ENCODE measurements at regions of chr1 and their contacts with region 1.

Region 1: GRCh38 chr1:226062558-226063223 is at the start of gene H3-3A:
- DNase-seq: peak; percentile 99
- H3K4me3 ChIP-seq: peak within 1 kb of the TSS; percentile 60 to 91 (median 84)
- H3K27ac ChIP-seq: peak within 1 kb of the TSS; percentile 97 to 100 (median 98)
- H3K4me1 ChIP-seq: peaks cover 0 to 48% (median 42%) of the 10 kb centered on the region in 4 donors
- H3K27me3 ChIP-seq: no peaks in the 10 kb centered on the region
- CTCF ChIP-seq: peak in 1 of 4 experiments; percentile 14
- EP300 ChIP-seq: no peak
- POLR2A ChIP-seq: peak; percentile 94 to 95
- total RNA-seq, gene H3-3A: 320 to 452 (median 393) TPM

Region 2: GRCh38 chr1:225652729-225653462 is 409.8 kb before region 1 on chr1 and contains the start of gene ENAH:
- intact Hi-C with region 1: loop called (anchors 5 kb)
- DNase-seq: peak; percentile 93
- H3K4me3 ChIP-seq: peak within 1 kb of the TSS; percentile 97 to 100 (median 98)
- H3K27ac ChIP-seq: peak within 1 kb of the TSS; percentile 97 to 100 (median 99)
- H3K4me1 ChIP-seq: peaks cover 0 to 53% (median 42%) of the 10 kb centered on the region in 4 donors
- H3K27me3 ChIP-seq: no peaks in the 10 kb centered on the region
- CTCF ChIP-seq: no peak
- EP300 ChIP-seq: no peak
- POLR2A ChIP-seq: no peak
- total RNA-seq, gene ENAH: 92.2 to 197 (median 116) TPM

Region 3: GRCh38 chr1:225999227-225999911 is 63.3 kb before region 1 on chr1 and contains the start of gene SDE2:
- intact Hi-C with region 1: loop called (anchors 1 kb)
- DNase-seq: peak; percentile 100
- H3K4me3 ChIP-seq: peak within 1 kb of the TSS; percentile 56 to 90 (median 81)
- H3K27ac ChIP-seq: peak within 1 kb of the TSS; percentile 95 to 98 (median 97)
- H3K4me1 ChIP-seq: peaks cover 0 to 36% (median 26%) of the 10 kb centered on the region in 4 donors
- H3K27me3 ChIP-seq: no peaks in the 10 kb centered on the region
- CTCF ChIP-seq: peak in 1 of 4 experiments; percentile 20
- EP300 ChIP-seq: peak in 2 of 4 donors; percentile 68 to 84
- POLR2A ChIP-seq: peak; percentile 81 to 87
- total RNA-seq, gene SDE2: 11.1 to 21.9 (median 18.4) TPM

Region 4: DNA sequence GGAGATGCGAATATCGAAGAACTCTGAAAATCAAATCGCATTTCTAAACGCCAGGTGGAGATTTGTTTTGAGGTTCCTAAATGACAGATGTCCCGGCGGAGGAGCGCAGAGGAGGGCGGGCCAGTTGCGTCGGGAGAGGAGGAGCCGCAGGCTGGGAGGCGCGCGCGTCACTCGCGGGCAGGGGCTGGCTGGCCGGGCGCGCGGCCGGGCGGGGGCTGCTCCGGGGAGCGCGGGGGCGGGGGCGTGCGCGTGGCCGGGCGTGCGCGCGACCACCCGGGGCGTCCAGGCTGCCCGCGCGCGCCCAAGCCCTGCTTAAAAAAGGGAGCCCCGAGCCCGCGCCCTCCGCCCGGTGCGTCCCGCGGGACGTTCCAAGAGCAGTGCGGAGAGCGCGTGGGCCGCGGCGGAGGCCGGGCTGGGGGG is 47.1 kb after region 1 on chr1:
- intact Hi-C with region 1: loop called (anchors 2 kb)
- DNase-seq: peak; percentile 94
- H3K4me3 ChIP-seq: peak overlapping the region; percentile 50 to 91 (median 78)
- H3K27ac ChIP-seq: peak overlapping the region; percentile 90 to 99 (median 98)
- H3K4me1 ChIP-seq: peaks cover 0 to 28% (median 20%) of the 10 kb centered on the region in 4 donors
- H3K27me3 ChIP-seq: no peaks in the 10 kb centered on the region
- CTCF ChIP-seq: peak in 1 of 4 experiments; percentile 20
- EP300 ChIP-seq: no peak
- POLR2A ChIP-seq: no peak

Region 5: DNA sequence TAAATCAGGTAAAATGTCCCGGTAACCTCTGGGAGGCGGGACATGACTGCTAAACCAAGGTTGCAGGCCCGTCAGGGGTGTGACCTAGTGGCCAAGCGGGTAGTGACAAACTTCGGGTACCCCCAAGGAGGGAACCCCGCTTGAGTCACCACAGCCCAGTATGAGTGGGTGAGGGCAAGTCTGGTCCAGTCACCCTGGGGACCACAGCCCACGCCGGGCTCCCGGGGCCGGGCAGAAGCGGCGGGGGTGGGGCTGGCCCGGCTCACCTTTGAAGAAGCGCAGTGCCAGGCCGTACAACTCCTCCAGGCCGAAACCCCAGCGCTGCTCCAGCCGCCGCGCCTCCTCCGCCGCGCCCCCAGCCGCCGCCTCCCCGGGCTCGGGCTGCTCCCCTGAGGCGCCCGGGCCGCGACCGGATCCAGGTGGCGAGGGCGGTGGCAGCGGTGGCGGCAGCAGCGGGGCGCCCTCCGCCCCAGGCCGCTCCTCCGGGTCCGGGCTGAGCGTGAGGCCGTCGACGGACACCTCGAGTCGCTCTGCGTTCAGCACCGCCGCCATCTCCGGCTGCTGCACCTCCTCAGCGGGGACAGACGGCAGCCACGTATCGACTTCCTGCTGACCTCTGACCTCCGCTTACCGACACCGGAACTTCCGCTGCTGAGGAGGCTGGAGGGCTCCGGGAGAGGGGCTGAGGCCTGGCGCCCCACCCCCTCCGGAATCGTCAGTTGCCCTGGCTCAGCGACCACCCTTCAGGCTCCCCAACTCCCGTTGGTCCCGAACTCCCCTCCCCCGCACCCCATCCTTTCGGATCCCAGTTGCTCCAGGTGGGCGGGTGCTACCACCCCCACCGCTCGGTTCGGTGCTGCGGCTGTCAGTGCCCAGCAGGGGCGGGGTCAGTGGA is 123.7 kb after region 1 on chr1 and contains the start of gene ACBD3:
- intact Hi-C with region 1: loop called (anchors 5 kb)
- DNase-seq: peak; percentile 94
- H3K4me3 ChIP-seq: peak within 1 kb of the TSS; percentile 72 to 97 (median 82)
- H3K27ac ChIP-seq: peak within 1 kb of the TSS; percentile 87 to 98 (median 91)
- H3K4me1 ChIP-seq: peaks cover 0 to 48% (median 41%) of the 10 kb centered on the region in 4 donors
- H3K27me3 ChIP-seq: no peaks in the 10 kb centered on the region
- CTCF ChIP-seq: peak in 2 of 4 experiments; percentile 19 to 22
- EP300 ChIP-seq: no peak
- POLR2A ChIP-seq: peak; percentile 75 to 84
- total RNA-seq, gene ACBD3: 32.9 to 37.8 (median 33.9) TPM

Region 6: DNA sequence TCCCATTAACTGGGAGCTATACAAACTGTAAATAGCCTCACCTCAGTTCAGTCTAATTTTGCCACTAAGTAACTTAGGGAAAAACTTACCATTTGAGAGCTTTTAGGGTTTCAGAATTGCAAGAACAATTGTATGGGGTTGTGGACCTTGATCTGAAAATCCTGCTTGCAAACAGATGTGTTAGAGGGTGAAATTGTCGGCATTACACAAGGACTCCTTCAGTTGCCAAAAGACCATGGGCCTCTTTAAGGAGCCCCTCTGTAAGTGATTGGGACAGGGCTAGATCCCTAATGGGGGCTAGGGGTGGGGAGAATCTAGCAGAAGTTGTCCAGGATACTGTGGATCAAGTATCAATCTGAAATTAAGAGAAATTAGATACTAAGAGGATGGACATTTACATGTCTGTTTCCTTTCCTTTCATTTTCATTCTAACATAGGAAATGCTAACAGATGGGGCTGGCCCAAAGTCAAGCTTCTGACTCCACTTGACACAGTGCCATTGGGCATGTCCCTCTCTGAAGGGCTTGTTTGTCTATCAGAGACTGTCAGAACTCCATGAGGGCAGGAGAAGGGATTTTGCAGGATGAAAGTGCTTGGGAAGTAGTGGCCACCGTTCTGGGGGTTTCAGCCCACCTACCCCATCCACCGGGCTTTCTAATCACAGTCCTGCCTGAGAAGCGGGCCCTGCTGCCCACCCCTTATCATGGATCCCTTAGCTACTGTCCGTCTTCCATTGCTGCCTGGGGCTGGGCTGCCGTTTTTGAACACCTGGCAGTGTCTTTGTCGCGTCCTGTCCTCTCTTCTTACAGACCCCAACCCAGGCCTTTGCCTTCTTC is 540.5 kb after region 1 on chr1:
- intact Hi-C with region 1: no loop called
- DNase-seq: peak; percentile 83
- H3K4me3 ChIP-seq: no peak overlapping the region
- H3K27ac ChIP-seq: peak overlapping the region; percentile 72 to 82 (median 77)
- H3K4me1 ChIP-seq: peaks cover 0 to 57% (median 48%) of the 10 kb centered on the region in 4 donors
- H3K27me3 ChIP-seq: no peaks in the 10 kb centered on the region
- CTCF ChIP-seq: no peak
- EP300 ChIP-seq: no peak
- POLR2A ChIP-seq: no peak

Measured in sigmoid colon (tissue), 7 donors.